H1 (cell line): ENCODE measurements at regions of chr12 and their contacts with region 1.

Region 1: GRCh38 chr12:106118-106591 is 39.6 kb downstream of the IQSEC3 start:
- DNase-seq: no peak
- H3K4me3 ChIP-seq: no peak overlapping the region
- H3K27ac ChIP-seq: no peak overlapping the region
- H3K4me1 ChIP-seq: peaks cover 0 to 17% (median 9%) of the 10 kb centered on the region in 4 experiments; a peak in 6 of 7 replicates
- H3K27me3 ChIP-seq: no peaks in the 10 kb centered on the region; a peak in 1 of 7 replicates
- CTCF ChIP-seq: peak; percentile 44 to 79 (median 58)
- EP300 ChIP-seq: no peak
- POLR2A ChIP-seq: no peak
- RAD21 ChIP-seq: peak; percentile 54 to 56

Region 2: GRCh38 chr12:117816-118345 is 11.7 kb after region 1 on chr12:
- CTCF ChIA-PET with region 1: interaction called, 36 read pairs
- POLR2A ChIA-PET with region 1: interaction called, 7 read pairs
- DNase-seq: no peak
- H3K4me3 ChIP-seq: no peak overlapping the region
- H3K27ac ChIP-seq: no peak overlapping the region
- H3K4me1 ChIP-seq: no peaks in the 10 kb centered on the region; a peak in 1 of 7 replicates
- H3K27me3 ChIP-seq: no peaks in the 10 kb centered on the region
- CTCF ChIP-seq: no peak
- EP300 ChIP-seq: no peak
- POLR2A ChIP-seq: no peak
- RAD21 ChIP-seq: no peak

Region 3: GRCh38 chr12:169528-170370 is 63.6 kb after region 1 on chr12:
- CTCF ChIA-PET with region 1: interaction called, 11 read pairs
- POLR2A ChIA-PET with region 1: interaction called, 3 read pairs
- DNase-seq: no peak
- H3K4me3 ChIP-seq: no peak overlapping the region
- H3K27ac ChIP-seq: no peak overlapping the region
- H3K4me1 ChIP-seq: peaks cover 3 to 28% (median 20%) of the 10 kb centered on the region in 4 experiments
- H3K27me3 ChIP-seq: peaks cover 0 to 3% (median 2%) of the 10 kb centered on the region in 4 experiments; a peak in 2 of 7 replicates
- CTCF ChIP-seq: no peak
- EP300 ChIP-seq: no peak
- POLR2A ChIP-seq: no peak
- RAD21 ChIP-seq: peak in 1 of 2 experiments; percentile 20; a peak in 1 of 4 replicates